ENCODE measurements at regions of chr10 and their contacts with region 1.

Region 1: DNA sequence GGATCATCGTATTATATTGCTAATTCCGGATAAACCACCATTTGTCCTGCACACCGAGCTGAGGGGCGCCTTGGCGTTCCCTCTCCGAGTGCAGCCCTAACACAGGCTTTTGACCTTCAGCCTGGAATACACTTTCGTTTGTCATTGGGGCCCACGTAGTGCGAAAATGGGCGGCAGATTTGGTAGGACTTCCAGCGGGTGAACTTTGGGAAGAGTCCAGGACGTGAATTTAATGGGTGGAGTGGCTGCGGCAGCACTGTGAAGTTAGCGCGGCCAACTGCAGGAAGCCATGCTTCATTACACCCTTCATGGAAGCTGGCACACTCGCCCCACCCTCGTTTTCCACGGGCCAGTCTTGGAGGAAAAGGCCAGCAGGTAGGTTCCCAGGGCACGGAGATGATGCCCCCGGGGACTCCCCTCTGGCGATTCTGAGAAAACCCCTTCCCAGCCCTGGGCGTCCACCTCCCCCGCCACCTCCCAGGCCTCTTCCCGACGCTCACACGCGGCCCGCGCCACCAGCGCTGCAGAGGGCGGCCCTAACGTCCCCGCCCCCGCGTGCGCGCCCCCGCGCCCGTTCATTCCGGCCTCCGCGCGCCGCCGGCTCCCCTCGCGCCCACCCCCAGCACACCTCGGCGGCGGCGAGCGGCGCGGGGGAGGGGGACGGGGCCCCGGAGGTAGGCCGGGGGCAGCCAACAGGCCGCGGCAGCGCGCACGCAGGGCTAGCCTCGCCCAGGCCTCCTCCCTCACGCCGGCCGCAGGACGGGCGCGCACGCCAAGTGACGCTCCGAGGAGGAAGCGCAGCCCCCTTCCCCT is at the start of gene MLLT10:
- DNase-seq: no peak
- ATAC-seq: peak; percentile 92
- H3K4me3 ChIP-seq: peak within 1 kb of the TSS; percentile 58 to 76
- H3K27ac ChIP-seq: peak within 1 kb of the TSS; percentile 93
- H3K4me1 ChIP-seq: peaks cover 32% of the 10 kb centered on the region
- H3K27me3 ChIP-seq: no peaks in the 10 kb centered on the region
- CTCF ChIP-seq: no peak
- total RNA-seq, gene MLLT10: 33.4 TPM

Region 2: DNA sequence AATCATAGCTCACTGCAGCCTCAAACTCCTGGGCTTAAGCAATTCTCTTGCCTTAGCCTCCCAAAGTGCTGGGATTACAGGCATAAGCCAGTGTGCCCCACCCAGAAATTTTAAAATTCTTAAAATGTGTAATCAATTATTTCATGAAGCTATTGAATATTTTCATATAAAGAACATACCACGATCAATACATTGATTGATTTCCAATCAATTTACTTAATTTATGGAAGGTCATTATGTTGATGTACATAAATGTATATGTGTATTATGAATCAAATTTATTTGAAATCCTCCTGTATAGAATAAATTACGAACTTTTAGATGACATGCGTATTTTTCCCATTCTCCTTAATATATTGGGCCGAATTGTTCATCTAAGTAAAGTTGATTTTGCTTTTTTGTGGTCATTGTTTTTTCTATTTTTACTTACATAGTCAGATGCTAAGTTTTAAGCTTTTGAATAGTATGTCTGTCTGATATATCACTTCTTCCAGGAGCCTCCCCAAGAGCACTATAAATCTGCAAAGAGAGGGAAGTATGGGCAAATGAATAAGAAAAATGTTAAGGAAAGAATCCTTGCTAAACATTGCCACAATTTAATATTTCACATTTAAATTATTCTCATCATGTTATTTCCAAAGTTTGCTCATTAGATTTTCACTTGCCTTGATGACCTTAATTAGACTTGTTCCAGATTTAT is 43.5 kb before region 1 on chr10:
- CTCF ChIA-PET with region 1: no interaction called
- POLR2A ChIA-PET with region 1: interaction called, 11 read pairs
- in situ Hi-C with region 1: no loop called
- intact Hi-C with region 1: loop called (anchors 5 kb)
- DNase-seq: no peak
- ATAC-seq: no peak
- H3K4me3 ChIP-seq: no peak overlapping the region
- H3K27ac ChIP-seq: peak overlapping the region; percentile 98
- H3K4me1 ChIP-seq: peaks cover 43% of the 10 kb centered on the region
- H3K27me3 ChIP-seq: no peaks in the 10 kb centered on the region
- CTCF ChIP-seq: no peak

Region 3: DNA sequence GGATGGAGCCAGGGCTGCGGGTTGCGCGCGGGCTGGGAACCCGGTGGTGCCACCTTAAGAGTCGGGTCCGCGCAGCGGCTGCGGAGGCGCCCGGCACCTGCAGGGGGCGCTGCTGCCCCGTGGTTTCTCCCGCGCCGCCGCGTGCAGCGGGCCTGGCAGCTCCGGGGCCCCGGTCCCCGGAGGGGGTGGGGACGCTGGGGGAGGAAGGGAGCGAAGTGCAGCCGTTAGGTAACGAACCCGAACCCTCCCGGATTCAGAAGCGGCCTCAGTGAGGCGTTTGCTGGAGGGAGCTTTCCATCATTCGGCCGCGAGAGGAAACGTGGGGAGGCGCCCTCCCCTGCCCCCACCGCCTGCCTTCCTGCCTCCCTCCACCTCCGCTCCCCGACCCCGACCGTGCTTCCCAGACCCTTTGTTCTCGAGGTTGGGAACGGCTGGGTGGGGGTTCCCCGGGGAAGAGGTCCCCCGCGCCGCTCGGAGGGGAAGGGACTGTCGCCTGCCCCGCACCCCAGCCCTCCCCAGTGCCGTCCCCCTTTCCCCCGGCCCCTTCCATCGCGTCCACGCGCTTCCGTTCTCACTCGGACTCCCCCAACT is 37.8 kb before region 1 on chr10:
- CTCF ChIA-PET with region 1: no interaction called
- POLR2A ChIA-PET with region 1: interaction called, 3 read pairs
- in situ Hi-C with region 1: no loop called
- intact Hi-C with region 1: loop called (anchors 5 kb)
- DNase-seq: no peak
- ATAC-seq: peak; percentile 77
- H3K4me3 ChIP-seq: peak overlapping the region; percentile 69 to 73
- H3K27ac ChIP-seq: peak overlapping the region; percentile 98
- H3K4me1 ChIP-seq: peaks cover 36% of the 10 kb centered on the region
- H3K27me3 ChIP-seq: no peaks in the 10 kb centered on the region
- CTCF ChIP-seq: peak; percentile 92

Region 4: DNA sequence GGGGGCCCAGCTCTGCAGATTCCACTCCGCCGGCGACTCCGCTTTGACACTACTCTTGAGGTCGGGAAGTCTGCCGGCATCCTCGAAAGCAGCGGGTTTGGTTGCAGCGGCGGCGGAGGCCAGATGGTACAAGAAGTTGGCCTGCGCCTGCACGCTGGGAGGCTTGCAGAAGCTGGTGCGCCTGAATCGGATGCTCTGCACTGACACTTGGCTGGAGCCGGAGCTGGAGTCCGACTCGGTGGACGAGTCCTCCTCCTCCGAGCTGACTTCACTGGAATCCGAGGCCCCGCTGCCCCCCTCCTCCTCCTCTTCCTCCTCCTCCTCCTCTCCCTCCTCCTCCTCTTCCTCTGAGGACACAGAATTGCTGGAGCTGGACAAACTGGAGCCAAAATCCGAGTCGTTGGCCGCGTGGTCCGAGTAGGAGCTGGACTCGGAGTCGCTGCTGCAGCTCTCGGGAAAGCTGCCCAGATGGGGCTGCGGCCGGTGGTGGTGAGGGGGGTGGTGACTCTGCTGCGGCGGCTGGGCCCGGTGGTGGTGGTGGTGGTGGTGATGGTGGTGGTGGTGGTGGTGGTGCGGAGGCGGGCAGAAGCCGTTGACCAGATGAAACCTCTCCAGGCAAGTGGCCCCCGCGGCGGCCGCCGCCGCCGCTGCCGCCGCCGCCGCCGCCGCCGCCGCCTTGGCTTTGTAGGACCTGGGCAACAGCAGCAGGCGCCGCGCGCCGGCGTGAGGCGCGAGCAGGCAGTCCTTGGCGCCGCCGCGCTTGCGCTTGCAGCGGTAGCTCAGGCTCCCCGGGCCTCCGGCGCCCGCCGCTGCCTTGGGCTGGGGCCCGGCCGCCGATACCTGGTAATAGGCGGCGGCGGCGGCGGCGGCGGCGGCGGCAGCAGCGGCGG is 17.2 kb before region 1 on chr10:
- CTCF ChIA-PET with region 1: interaction called, 3 read pairs
- POLR2A ChIA-PET with region 1: interaction called, 17 read pairs
- in situ Hi-C with region 1: no loop called
- intact Hi-C with region 1: loop called (anchors 2 kb)
- DNase-seq: no peak
- ATAC-seq: peak; percentile 47
- H3K4me3 ChIP-seq: peak overlapping the region; percentile 62
- H3K27ac ChIP-seq: peak overlapping the region; percentile 95
- H3K4me1 ChIP-seq: peaks cover 21% of the 10 kb centered on the region
- H3K27me3 ChIP-seq: no peaks in the 10 kb centered on the region
- CTCF ChIP-seq: no peak

Region 5: GRCh38 chr10:21572578-21572977 is 38.9 kb after region 1 on chr10:
- CTCF ChIA-PET with region 1: no interaction called
- POLR2A ChIA-PET with region 1: interaction called, 10 read pairs
- in situ Hi-C with region 1: no loop called
- intact Hi-C with region 1: no loop called
- DNase-seq: no peak
- ATAC-seq: no peak
- H3K4me3 ChIP-seq: no peak overlapping the region
- H3K27ac ChIP-seq: no peak overlapping the region
- H3K4me1 ChIP-seq: peaks cover 3% of the 10 kb centered on the region; the same call in 1 of the 2 replicates
- H3K27me3 ChIP-seq: no peaks in the 10 kb centered on the region
- CTCF ChIP-seq: no peak